IMR-90 (cell line): ENCODE measurements at regions of chr3 and their contacts with region 1.

Region 1: DNA sequence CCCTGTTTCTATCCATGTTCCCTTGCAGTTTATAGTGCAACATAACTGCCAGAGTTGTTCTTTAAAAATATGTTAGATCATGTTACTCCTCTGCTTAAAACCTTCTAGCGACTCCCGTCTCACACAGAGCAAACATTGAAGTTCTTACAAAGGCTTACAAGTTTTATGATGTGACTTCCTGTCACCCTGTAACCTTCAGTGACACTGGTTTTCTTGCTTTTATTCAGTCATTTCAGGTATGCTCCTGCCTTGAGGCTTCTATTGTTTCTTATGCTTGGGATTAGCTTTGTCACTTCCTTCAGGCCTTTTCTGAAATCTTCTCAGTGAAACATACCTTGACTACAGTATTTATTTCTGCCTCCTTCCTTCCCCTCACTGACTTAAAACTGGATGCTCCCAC is 252.1 kb downstream of the DOCK3 start:
- DNase-seq: no peak
- ATAC-seq: no peak
- H3K4me3 ChIP-seq: no peak overlapping the region
- H3K27ac ChIP-seq: no peak overlapping the region
- H3K4me1 ChIP-seq: no peaks in the 10 kb centered on the region
- H3K27me3 ChIP-seq: no peaks in the 10 kb centered on the region
- CTCF ChIP-seq: no peak
- POLR2A ChIP-seq: no peak
- RAD21 ChIP-seq: no peak

Region 2: DNA sequence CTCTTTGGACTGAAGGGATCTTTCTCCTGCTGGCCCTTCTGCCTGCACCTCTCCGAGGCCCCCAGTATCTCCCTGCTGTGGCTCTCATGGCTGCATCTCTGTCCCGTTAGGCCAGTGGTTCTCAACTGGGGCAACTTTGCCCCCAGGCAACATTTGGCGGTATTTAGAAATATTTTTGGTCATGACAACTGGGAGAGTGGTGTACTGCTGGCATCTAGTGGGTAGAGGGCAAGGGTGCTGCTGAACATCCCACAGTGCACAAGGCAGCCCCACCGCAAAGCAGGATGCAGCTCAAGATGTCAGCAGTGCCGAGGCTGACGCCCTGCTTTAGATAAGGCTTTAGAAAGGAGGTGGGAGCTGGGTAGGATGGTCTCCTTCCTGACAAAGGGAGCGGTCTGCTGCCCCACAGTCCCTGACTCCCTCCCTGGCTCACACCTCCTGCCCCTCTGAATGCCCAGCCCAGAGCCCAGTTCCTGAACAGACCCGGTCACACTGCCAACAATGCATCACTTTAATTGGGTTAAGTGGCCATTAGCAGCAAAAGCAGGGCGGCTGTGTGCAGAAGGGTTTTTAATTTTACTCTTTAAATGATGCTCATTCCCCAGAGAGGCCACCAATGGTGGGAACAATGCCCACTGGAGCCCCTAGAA is 498.8 kb before region 1 on chr3:
- CTCF ChIA-PET with region 1: no interaction called
- POLR2A ChIA-PET with region 1: no interaction called
- dilution Hi-C with region 1: no loop called
- in situ Hi-C with region 1: no loop called
- intact Hi-C with region 1: no loop called
- DNase-seq: no peak
- ATAC-seq: peak; percentile 27; the same call in 1 of the 2 replicates
- H3K4me3 ChIP-seq: no peak overlapping the region
- H3K27ac ChIP-seq: no peak overlapping the region
- H3K4me1 ChIP-seq: no peaks in the 10 kb centered on the region
- H3K27me3 ChIP-seq: peaks cover 49% of the 10 kb centered on the region
- CTCF ChIP-seq: no peak
- POLR2A ChIP-seq: no peak
- RAD21 ChIP-seq: peak; percentile 20; the same call in 1 of the 2 replicates

Region 3: GRCh38 chr3:50652709-50653108 is 274.2 kb before region 1 on chr3:
- CTCF ChIA-PET with region 1: no interaction called
- POLR2A ChIA-PET with region 1: interaction called, 11 read pairs
- dilution Hi-C with region 1: no loop called
- in situ Hi-C with region 1: no loop called
- intact Hi-C with region 1: no loop called
- DNase-seq: peak; percentile 8
- ATAC-seq: peak; percentile 27
- H3K4me3 ChIP-seq: no peak overlapping the region
- H3K27ac ChIP-seq: no peak overlapping the region
- H3K4me1 ChIP-seq: no peaks in the 10 kb centered on the region
- H3K27me3 ChIP-seq: no peaks in the 10 kb centered on the region; the same call in 1 of the 2 replicates
- CTCF ChIP-seq: peak; percentile 37; the same call in 1 of the 2 replicates
- POLR2A ChIP-seq: no peak
- RAD21 ChIP-seq: peak; percentile 52; the same call in 1 of the 2 replicates